Psoas muscle (tissue), 8 donors: ENCODE measurements at regions of chr2 and their contacts with region 1.

Region 1: GRCh38 chr2:24977631-24978030 is 5.9 kb upstream of the DNAJC27 start:
- DNase-seq: no peak
- ATAC-seq: no peak
- H3K4me3 ChIP-seq: no peak overlapping the region
- H3K27ac ChIP-seq: no peak overlapping the region
- H3K4me1 ChIP-seq: peaks cover 6% of the 10 kb centered on the region
- H3K27me3 ChIP-seq: no peaks in the 10 kb centered on the region
- CTCF ChIP-seq: no peak

Region 2: DNA sequence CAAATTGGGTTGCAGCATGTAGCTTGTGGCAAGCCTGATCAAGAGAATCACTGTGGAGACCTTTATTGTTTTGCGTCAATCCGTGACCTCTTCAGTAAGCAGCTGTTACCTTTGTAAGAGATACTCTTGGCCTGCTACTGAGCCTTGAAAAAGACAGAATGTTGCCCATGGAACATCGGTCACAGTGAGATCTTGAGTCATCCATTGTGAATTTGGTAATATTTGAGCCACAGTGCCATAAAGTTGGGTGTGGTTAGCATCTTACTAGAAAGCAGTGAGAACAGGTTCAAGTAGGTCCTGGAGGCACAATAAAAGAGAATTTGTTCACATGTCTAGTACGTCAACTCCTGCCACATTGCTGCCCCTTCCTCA is 51.5 kb after region 1 on chr2:
- intact Hi-C with region 1: loop called in 1 of 2 experiments (anchors 5 kb)
- DNase-seq: no peak
- ATAC-seq: peak; percentile 76 to 84 (median 81)
- H3K4me3 ChIP-seq: no peak overlapping the region
- H3K27ac ChIP-seq: peak overlapping the region; percentile 50
- H3K4me1 ChIP-seq: peaks cover 43% of the 10 kb centered on the region
- H3K27me3 ChIP-seq: no peaks in the 10 kb centered on the region
- CTCF ChIP-seq: no peak

Region 3: GRCh38 chr2:25197336-25198208 is 219.9 kb after region 1 on chr2:
- intact Hi-C with region 1: loop called in 1 of 2 experiments (anchors 5 kb)
- DNase-seq: no peak
- ATAC-seq: no peak
- H3K4me3 ChIP-seq: no peak overlapping the region
- H3K27ac ChIP-seq: no peak overlapping the region
- H3K4me1 ChIP-seq: no peaks in the 10 kb centered on the region
- H3K27me3 ChIP-seq: no peaks in the 10 kb centered on the region
- CTCF ChIP-seq: no peak

Region 4: DNA sequence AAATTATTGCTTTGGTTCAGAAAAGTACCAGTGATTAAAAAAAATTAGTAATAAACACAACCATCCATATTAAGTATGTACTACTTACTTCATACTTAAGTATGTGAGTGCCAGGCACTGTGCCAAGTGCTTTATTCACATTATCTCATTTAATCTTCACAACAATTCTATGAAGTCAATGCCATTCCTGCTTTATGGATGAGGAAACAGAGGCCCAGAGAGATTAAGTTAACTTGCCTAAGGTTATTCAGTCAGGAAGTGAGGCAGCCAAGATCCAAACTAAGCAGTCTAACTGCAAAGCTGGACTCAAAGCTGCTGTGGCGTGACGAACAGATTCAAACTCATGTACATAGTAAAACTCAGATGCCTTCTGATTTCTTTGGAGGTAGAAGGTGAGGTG is 673.4 kb after region 1 on chr2:
- intact Hi-C with region 1: no loop called
- DNase-seq: no peak
- ATAC-seq: no peak
- H3K4me3 ChIP-seq: no peak overlapping the region
- H3K27ac ChIP-seq: no peak overlapping the region
- H3K4me1 ChIP-seq: no peaks in the 10 kb centered on the region
- H3K27me3 ChIP-seq: no peaks in the 10 kb centered on the region
- CTCF ChIP-seq: no peak